A549 (cell line): ENCODE measurements at regions of chr14 and their contacts with region 1.

Region 1: DNA sequence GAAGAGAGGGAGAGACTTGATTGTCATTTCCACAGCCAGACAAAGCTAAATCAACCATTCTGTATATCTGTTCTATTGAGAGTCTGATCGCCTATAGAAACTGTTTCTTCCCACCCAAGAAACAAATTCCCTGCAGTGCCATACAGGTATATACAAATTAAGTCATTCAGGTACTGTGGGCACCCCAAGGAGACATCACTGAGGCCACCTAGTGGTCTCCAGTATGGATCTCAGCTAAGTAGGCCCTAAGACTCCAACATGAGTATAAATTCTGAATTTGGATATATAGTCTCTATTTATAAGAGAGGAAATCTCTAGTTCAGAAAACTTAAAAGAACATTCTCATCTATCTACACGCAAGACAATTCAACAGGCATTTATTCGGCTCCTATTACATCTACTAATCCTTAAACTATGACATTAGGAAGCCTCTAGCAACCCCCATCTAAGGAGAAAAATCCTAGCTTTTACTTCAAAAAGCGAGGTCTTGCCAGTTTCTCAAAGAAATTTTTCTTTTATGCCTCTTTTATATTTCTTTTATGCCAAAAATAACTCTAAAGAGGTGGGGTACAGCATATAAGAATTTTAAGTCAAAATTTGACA is 62.6 kb downstream of the DCAF5 start:
- DNase-seq: peak; percentile 35 to 64
- ATAC-seq: peak; percentile 86 to 93; a peak in 5 of 6 replicates
- H3K4me3 ChIP-seq: no peak overlapping the region
- H3K27ac ChIP-seq: no peak overlapping the region
- H3K4me1 ChIP-seq: peaks cover 24% of the 10 kb centered on the region
- CTCF ChIP-seq: peak; percentile 84
- EP300 ChIP-seq: no peak
- POLR2A ChIP-seq: no peak
- RAD21 ChIP-seq: peak; percentile 84 to 88

Region 2: DNA sequence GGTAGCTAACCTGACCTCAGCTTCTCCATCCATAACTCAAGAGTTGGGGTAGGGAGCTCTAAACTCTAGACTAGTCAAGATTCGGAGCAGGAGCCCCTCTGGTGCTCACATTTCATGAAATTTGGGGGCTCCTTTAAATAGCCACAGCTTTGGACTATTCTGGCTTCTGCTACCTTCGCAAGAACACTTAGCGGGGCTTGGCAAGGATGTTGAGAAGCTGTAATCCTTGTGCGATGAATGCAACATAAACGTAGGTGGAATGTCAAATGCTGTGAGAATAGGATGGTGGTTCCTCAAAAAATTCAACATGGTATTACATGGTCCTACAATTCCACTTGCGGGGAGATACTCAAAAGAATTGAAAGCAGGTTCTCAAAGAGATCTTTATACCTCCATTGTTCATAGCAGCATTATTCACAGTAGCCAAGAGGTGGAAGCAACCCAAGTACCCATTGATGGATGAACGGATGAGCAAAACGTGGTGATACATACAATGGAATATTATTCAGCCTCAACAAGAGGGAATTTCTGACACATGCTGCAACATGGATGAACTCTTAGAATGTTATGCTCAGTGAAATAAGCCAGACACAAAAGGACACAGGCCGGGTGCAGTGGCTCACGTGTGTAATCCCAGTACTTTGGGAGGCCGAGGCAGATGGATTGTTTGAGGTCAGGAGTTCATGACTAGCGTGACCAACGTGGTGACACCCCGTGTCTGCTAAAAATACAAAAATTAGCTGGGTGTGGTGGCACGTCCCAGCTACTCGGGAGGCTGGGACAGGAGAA is 185.0 kb before region 1 on chr14:
- CTCF ChIA-PET with region 1: interaction called, 48 read pairs
- POLR2A ChIA-PET with region 1: no interaction called
- DNase-seq: no peak
- ATAC-seq: no peak
- H3K4me3 ChIP-seq: no peak overlapping the region
- H3K27ac ChIP-seq: no peak overlapping the region
- H3K4me1 ChIP-seq: peaks cover 9% of the 10 kb centered on the region; the same call in 1 of the 3 replicates
- CTCF ChIP-seq: no peak
- EP300 ChIP-seq: no peak
- POLR2A ChIP-seq: no peak
- RAD21 ChIP-seq: no peak

Region 3: GRCh38 chr14:68926236-68926635 is 164.1 kb before region 1 on chr14:
- CTCF ChIA-PET with region 1: interaction called, 12 read pairs
- POLR2A ChIA-PET with region 1: no interaction called
- DNase-seq: peak in 1 of 2 experiments; percentile 46
- ATAC-seq: no peak
- H3K4me3 ChIP-seq: no peak overlapping the region
- H3K27ac ChIP-seq: no peak overlapping the region
- H3K4me1 ChIP-seq: peaks cover 26% of the 10 kb centered on the region
- CTCF ChIP-seq: peak; percentile 23; the same call in 2 of the 3 replicates
- EP300 ChIP-seq: no peak
- POLR2A ChIP-seq: no peak
- RAD21 ChIP-seq: no peak

Region 4: DNA sequence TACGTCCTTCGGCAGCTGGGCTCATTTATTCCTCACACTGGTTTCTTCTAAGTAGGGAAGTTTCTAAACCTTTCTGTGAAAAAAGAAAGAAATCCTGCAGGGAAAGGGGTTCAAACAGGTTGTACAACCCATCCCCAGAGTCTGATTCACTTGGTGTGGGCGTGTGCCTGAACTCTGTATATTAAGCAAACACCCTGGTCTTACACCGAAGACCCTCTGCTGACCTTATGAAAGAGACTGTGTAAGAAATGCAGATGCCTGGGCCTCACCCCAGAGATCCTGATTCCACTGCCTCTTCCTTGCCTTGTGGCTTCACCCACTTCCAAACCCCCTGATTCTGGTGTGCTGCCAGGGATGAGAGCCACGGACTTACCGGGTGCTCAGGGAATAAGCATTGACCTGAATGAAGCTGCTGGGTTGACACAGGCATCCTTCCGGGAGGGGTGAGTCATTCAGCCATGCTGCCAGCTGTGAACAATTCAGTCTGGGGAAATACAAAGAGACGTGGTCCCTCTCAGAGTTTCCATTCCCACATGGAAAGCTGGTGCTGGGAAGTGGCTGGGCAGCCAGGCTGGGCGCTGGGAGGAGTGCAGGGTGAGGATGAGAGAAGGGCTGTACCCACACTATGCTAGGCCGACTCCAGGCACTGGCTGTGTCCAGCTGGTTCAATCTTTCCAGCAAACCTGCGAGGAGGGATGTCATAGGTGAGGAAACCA is 84.7 kb before region 1 on chr14:
- CTCF ChIA-PET with region 1: interaction called, 11 read pairs
- POLR2A ChIA-PET with region 1: no interaction called
- DNase-seq: peak; percentile 70 to 86
- ATAC-seq: peak; percentile 84 to 92
- H3K4me3 ChIP-seq: no peak overlapping the region
- H3K27ac ChIP-seq: peak overlapping the region; percentile 14 to 67; a peak in 4 of 6 replicates
- H3K4me1 ChIP-seq: peaks cover 26% of the 10 kb centered on the region
- CTCF ChIP-seq: no peak
- EP300 ChIP-seq: no peak
- POLR2A ChIP-seq: no peak
- RAD21 ChIP-seq: 0 out of 5 replicates have a peak, but pooled peaks of 1 of the 2 experiments have one; percentile 23

Region 5: GRCh38 chr14:69043596-69044260 is 46.6 kb before region 1 on chr14:
- CTCF ChIA-PET with region 1: interaction called, 17 read pairs
- POLR2A ChIA-PET with region 1: no interaction called
- DNase-seq: no peak
- ATAC-seq: no peak
- H3K4me3 ChIP-seq: no peak overlapping the region
- H3K27ac ChIP-seq: peak overlapping the region in 1 of 2 experiments; percentile 31; a peak in 1 of 6 replicates
- H3K4me1 ChIP-seq: peaks cover 13% of the 10 kb centered on the region
- CTCF ChIP-seq: no peak
- EP300 ChIP-seq: no peak
- POLR2A ChIP-seq: no peak
- RAD21 ChIP-seq: no peak

Region 6: DNA sequence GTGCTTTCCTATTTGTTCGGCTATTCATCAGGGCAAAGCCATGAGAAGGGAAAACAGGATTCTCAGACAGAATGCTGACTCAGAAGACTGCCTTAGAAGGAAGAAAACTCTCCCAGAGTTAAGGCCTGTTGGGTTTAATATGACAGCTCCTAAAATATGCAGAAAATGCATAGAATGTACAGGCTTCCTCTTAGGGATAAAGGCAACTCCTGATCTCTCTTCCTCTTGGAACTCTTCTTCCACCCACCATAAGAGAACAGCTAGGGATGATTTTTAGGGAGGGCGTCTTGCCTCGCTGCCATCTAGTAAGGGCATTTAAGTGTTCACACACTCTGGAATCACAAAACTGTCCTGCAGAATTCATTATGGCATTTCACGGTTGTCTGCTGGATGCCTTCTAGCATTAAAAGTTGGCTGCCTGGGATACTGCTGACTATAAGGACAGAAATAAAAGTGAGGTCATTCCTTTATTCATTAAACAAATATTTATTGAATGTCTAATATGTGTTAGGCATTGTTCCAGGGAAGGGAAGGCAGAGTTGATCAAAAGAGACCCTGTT is 11.0 kb before region 1 on chr14:
- CTCF ChIA-PET with region 1: interaction called, 40 read pairs
- POLR2A ChIA-PET with region 1: no interaction called
- DNase-seq: peak; percentile 44 to 63
- ATAC-seq: peak; percentile 80 to 84
- H3K4me3 ChIP-seq: no peak overlapping the region
- H3K27ac ChIP-seq: peak overlapping the region; percentile 69 to 84
- H3K4me1 ChIP-seq: peaks cover 50% of the 10 kb centered on the region
- CTCF ChIP-seq: no peak
- EP300 ChIP-seq: no peak
- POLR2A ChIP-seq: no peak
- RAD21 ChIP-seq: peak in 1 of 2 experiments; percentile 6; a peak in 1 of 5 replicates

Region 7: DNA sequence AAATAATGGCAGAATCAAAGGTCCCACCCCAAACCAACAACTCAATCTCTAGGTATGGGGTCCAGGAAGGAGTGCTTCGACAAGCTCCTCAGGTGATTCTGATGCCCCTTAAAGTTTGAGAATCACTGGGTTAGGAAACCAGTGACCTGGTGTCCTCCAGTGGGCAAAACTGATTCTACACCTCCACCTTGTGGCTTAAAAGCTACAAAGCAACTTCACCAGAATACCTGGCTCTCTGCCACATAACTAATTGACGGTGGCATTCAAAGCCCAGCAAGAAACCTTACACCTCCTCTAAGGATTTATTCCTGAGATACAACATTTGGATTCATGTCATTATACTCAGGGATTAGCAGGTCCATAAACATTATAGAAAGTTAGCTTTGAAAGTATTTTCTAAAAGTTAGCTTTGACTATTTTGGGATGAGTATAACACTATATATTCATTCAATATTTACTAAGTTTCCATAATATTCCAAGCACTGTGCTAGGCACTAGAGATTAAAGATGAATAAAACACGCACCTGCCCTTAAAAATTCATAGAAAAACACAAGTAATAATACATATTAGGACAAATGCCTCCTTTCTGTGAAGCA is 17.2 kb after region 1 on chr14:
- CTCF ChIA-PET with region 1: interaction called, 35 read pairs
- POLR2A ChIA-PET with region 1: no interaction called
- DNase-seq: peak; percentile 55 to 71
- ATAC-seq: peak; percentile 85 to 91; a peak in 5 of 6 replicates
- H3K4me3 ChIP-seq: no peak overlapping the region
- H3K27ac ChIP-seq: peak overlapping the region in 1 of 2 experiments; percentile 5; a peak in 1 of 6 replicates
- H3K4me1 ChIP-seq: no peaks in the 10 kb centered on the region; the same call in 2 of the 3 replicates
- CTCF ChIP-seq: peak; percentile 86
- EP300 ChIP-seq: no peak
- POLR2A ChIP-seq: no peak
- RAD21 ChIP-seq: peak; percentile 92 to 93

Region 8: GRCh38 chr14:69133206-69134125 is 43.2 kb after region 1 on chr14:
- CTCF ChIA-PET with region 1: no interaction called
- POLR2A ChIA-PET with region 1: no interaction called
- DNase-seq: peak in 1 of 2 experiments; percentile 19
- ATAC-seq: peak; percentile 45 to 55; a peak in 3 of 6 replicates
- H3K4me3 ChIP-seq: no peak overlapping the region
- H3K27ac ChIP-seq: peak overlapping the region; percentile 42 to 78; a peak in 5 of 6 replicates
- H3K4me1 ChIP-seq: peaks cover 39% of the 10 kb centered on the region
- CTCF ChIP-seq: no peak
- EP300 ChIP-seq: no peak
- POLR2A ChIP-seq: no peak
- RAD21 ChIP-seq: no peak